Activated CD4-positive, alpha-beta T cell treated with anti-CD3 and anti-CD28 coated beads for 36 hours (primary cell): ENCODE measurements at regions of chr19 and their contacts with region 1.

Region 1: GRCh38 chr19:57578487-57579205 is at the start of gene ZNF416:
- DNase-seq: peak; percentile 97
- ATAC-seq: peak; percentile 96
- H3K4me3 Mint-ChIP-seq: peak within 1 kb of the TSS; percentile 77
- H3K27ac Mint-ChIP-seq: peak within 1 kb of the TSS; percentile 77
- H3K4me1 Mint-ChIP-seq: peaks cover 23% of the 10 kb centered on the region
- H3K27me3 Mint-ChIP-seq: no peaks in the 10 kb centered on the region
- total RNA-seq, gene ZNF416: 3.3 to 3.7 TPM

Region 2: DNA sequence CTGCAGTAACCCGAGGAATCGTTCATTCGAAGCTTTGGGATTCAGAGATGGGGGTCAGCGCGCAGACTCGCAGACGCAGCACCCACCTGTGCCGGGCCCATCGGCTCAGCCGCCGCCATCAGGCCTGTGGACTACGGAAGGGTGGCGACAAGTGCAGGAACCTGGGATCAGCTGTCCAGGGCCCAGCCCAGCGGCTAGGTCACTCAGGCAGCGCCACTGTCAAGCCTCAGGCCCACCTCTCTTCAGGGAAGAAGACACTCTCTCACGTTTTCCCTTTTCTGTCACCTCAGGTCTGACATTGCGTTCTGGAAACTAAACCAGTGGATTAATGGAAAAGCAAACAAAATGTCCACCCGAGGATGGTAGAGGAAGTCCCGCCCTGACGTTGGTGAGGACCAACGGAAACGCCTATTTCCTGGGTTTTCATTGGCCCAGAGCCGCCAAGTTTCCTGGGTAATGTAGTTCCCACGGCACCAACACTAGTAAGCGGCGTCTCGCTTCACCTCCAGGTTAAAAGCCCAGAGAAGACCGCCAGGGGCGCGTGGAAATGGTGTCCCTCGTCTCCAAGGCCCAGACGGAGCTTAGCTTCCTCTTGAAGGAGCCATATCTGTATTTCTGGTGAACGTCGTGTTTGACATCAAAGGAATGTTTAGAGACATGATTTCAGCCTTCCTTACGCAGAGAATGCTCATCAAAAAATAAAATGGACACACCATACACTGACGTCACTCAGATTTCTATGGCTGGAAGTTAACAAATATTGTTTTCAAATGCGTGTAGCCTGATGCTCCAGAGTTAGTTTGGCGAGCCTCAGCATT is 101.2 kb before region 1 on chr19 and contains the start of gene ZNF772:
- CTCF ChIA-PET with region 1: no interaction called
- POLR2A ChIA-PET with region 1: no interaction called
- intact Hi-C with region 1: loop called (anchors 2 to 5 kb)
- DNase-seq: peak; percentile 92
- ATAC-seq: peak; percentile 100
- H3K4me3 Mint-ChIP-seq: peak within 1 kb of the TSS; percentile 76
- H3K27ac Mint-ChIP-seq: peak within 1 kb of the TSS; percentile 79
- H3K4me1 Mint-ChIP-seq: peaks cover 17% of the 10 kb centered on the region
- H3K27me3 Mint-ChIP-seq: no peaks in the 10 kb centered on the region
- total RNA-seq, gene ZNF772: 6.5 to 7.5 TPM

Region 3: GRCh38 chr19:57559404-57560025 is 19.1 kb before region 1 on chr19 and contains the start of gene ZNF550:
- CTCF ChIA-PET with region 1: no interaction called
- POLR2A ChIA-PET with region 1: no interaction called
- intact Hi-C with region 1: loop called in 1 of 2 experiments (anchors 1 kb)
- DNase-seq: peak; percentile 93
- ATAC-seq: peak; percentile 97
- H3K4me3 Mint-ChIP-seq: peak within 1 kb of the TSS; percentile 98
- H3K27ac Mint-ChIP-seq: peak within 1 kb of the TSS; percentile 93
- H3K4me1 Mint-ChIP-seq: peaks cover 22% of the 10 kb centered on the region
- H3K27me3 Mint-ChIP-seq: no peaks in the 10 kb centered on the region
- total RNA-seq, gene ZNF550: 11.8 to 11.9 TPM

Region 4: GRCh38 chr19:57613941-57614743 is 35.5 kb after region 1 on chr19 and contains the start of gene ZNF134:
- CTCF ChIA-PET with region 1: no interaction called
- POLR2A ChIA-PET with region 1: no interaction called
- intact Hi-C with region 1: loop called (anchors 1 to 5 kb)
- DNase-seq: peak; percentile 94
- ATAC-seq: peak; percentile 99
- H3K4me3 Mint-ChIP-seq: peak within 1 kb of the TSS; percentile 89
- H3K27ac Mint-ChIP-seq: peak within 1 kb of the TSS; percentile 79
- H3K4me1 Mint-ChIP-seq: peaks cover 19% of the 10 kb centered on the region
- H3K27me3 Mint-ChIP-seq: no peaks in the 10 kb centered on the region
- total RNA-seq, gene ZNF134: 7.6 to 9.7 TPM

Region 5: GRCh38 chr19:57746580-57747471 is 168.2 kb after region 1 on chr19 and contains the start of gene ZNF776:
- CTCF ChIA-PET with region 1: no interaction called
- POLR2A ChIA-PET with region 1: no interaction called
- intact Hi-C with region 1: loop called in 1 of 2 experiments (anchors 2 kb)
- DNase-seq: peak; percentile 89
- ATAC-seq: peak; percentile 98
- H3K4me3 Mint-ChIP-seq: peak within 1 kb of the TSS; percentile 93
- H3K27ac Mint-ChIP-seq: peak within 1 kb of the TSS; percentile 98
- H3K4me1 Mint-ChIP-seq: peaks cover 15% of the 10 kb centered on the region
- H3K27me3 Mint-ChIP-seq: no peaks in the 10 kb centered on the region
- total RNA-seq, gene ZNF776: 8.9 to 14.7 TPM

Region 6: GRCh38 chr19:57905258-57905657 is 326.6 kb after region 1 on chr19:
- CTCF ChIA-PET with region 1: no interaction called
- POLR2A ChIA-PET with region 1: no interaction called
- intact Hi-C with region 1: no loop called
- DNase-seq: no peak
- ATAC-seq: no peak
- H3K4me3 Mint-ChIP-seq: no peak overlapping the region
- H3K27ac Mint-ChIP-seq: no peak overlapping the region
- H3K4me1 Mint-ChIP-seq: peaks cover 13% of the 10 kb centered on the region
- H3K27me3 Mint-ChIP-seq: no peaks in the 10 kb centered on the region